Dendritic cell treated with granulocyte-macrophage colony-stimulating factor and Interleukin-4, amounts not matched to agents 40 ng/mL and 50 ng/mL, for 4 days (primary cell): ENCODE measurements at regions of chr12 and their contacts with region 1.

Region 1: GRCh38 chr12:110600254-110600653 is 13.7 kb upstream of the TCTN1 start:
- H3K4me3 Mint-ChIP-seq: peak overlapping the region; percentile 20
- H3K27ac Mint-ChIP-seq: peak overlapping the region; percentile 62
- H3K4me1 Mint-ChIP-seq: peaks cover 25% of the 10 kb centered on the region
- H3K27me3 Mint-ChIP-seq: no peaks in the 10 kb centered on the region

Region 2: GRCh38 chr12:110449799-110450497 is 150.3 kb before region 1 on chr12 and contains the start of gene ARPC3:
- intact Hi-C with region 1: loop called (anchors 1 kb)
- H3K4me3 Mint-ChIP-seq: peak within 1 kb of the TSS; percentile 100
- H3K27ac Mint-ChIP-seq: peak within 1 kb of the TSS; percentile 100
- H3K4me1 Mint-ChIP-seq: peaks cover 57% of the 10 kb centered on the region
- H3K27me3 Mint-ChIP-seq: no peaks in the 10 kb centered on the region

Region 3: DNA sequence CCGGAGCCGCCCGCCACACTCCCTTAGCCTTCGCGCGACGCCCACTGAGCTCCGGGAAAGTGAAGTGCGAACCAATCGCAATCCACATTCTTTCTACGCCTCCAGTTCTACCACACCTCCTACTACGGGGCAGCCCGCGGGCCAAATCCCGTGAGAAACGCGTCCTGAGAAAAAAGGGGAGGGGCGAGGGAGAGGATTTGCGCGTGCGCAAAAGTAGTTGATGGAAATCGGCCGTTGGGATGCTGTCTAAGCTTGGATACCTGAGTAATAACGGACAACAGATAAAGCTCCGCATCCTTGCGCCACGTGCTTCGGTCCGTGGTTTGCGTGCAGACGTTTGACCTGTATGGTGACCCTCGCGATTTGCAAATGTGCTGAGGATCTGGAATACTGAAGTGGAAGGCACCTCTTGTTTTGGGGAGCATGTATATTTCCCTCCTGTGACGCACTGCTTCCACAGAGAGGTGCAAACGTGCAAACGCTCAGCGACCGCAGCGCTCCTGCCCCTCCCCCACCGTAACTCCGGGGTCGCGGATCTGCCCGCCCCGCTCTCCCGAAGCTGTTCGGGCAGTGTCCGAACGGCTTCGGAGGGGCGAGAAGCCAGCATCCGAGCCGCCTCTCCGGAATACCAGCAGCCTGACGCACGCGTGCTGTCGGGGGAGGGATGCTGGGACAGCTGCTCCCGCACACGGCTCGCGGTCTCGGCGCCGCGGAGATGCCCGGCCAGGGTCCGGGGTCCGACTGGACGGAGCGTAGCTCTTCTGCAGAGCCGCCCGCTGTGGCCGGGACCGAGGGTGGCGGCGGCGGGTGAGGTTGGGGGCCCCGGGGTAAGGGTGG is 131.8 kb before region 1 on chr12 and contains the starts of genes FAM216A and GPN3:
- intact Hi-C with region 1: loop called (anchors 5 kb)
- H3K4me3 Mint-ChIP-seq: peak within 1 kb of the TSS; percentile 96
- H3K27ac Mint-ChIP-seq: peak within 1 kb of the TSS; percentile 84
- H3K4me1 Mint-ChIP-seq: peaks cover 33% of the 10 kb centered on the region
- H3K27me3 Mint-ChIP-seq: no peaks in the 10 kb centered on the region

Region 4: DNA sequence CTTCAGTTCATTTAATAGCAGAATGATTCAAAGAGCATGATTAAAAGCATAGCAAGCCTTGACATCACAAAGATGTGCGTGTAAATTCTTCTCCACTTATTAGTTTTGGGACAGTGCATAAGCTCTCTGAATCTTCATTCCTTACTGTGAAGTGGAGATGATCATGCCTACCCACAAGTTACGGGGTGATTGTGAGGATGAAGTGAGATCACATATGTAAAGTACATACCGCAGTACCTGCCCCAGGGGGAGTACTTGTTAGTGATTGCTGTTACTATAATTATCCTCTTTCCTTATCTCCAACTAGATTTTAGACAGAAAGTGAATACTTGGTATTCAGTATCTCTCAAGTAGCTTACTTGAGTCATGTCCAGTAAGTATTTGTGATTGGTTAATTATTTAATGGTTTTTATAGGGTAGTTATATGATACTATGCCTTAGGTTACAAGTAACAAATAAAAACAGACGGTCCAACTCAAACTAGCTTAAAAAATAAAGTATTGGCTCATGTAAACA is 92.1 kb before region 1 on chr12:
- intact Hi-C with region 1: loop called (anchors 1 kb)
- H3K4me3 Mint-ChIP-seq: no peak overlapping the region
- H3K27ac Mint-ChIP-seq: no peak overlapping the region
- H3K4me1 Mint-ChIP-seq: no peaks in the 10 kb centered on the region
- H3K27me3 Mint-ChIP-seq: no peaks in the 10 kb centered on the region

Region 5: GRCh38 chr12:110555577-110556406 is 44.5 kb before region 1 on chr12:
- intact Hi-C with region 1: loop called (anchors 1 kb)
- H3K4me3 Mint-ChIP-seq: no peak overlapping the region
- H3K27ac Mint-ChIP-seq: peak overlapping the region; percentile 50
- H3K4me1 Mint-ChIP-seq: peaks cover 47% of the 10 kb centered on the region
- H3K27me3 Mint-ChIP-seq: no peaks in the 10 kb centered on the region

Region 6: DNA sequence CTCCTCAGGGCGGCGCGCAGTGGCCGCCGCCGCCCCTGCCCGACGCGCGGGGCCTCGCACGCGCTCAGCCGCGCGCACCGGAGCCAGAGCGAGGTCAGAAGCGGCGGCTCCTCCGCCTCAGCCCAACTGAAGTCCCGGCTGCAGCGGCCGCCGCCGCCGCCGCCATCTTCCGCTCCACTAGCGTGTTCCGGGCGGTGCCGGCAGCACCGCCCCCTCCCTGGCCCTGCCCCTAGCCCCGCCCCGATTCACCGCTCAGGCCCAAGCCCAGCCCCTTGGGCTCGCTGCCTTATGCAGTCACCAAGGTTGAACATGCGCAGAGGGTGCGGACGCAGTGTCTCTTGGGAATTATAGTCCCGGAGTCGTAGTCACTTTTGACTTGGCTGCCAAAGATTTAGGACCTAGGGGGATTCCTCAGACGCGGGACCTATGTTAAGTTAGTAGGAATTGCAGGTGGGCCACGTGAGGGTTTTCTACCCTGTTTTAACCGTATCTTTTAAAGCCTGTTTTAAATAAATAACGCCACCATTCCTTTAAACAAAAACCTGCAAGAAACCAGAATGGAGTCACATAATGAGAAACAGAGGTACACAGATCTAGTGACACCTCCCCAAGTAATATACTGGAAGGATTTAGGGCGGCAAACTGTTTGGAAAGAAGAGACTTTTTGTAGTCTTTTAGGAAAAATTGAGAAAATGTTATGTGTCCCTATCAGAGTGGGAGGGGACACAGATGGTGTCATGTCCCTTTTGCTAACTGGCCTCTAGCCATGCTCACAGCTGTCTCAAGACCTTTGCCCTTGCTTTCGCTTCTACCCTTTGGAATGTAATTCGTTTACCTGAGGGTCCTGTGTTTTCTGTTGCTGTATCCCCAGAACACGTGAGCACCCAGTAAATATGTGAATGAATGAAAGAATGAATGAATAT is 16.9 kb before region 1 on chr12 and contains the start of gene PPTC7:
- intact Hi-C with region 1: loop called (anchors 2 kb)
- H3K4me3 Mint-ChIP-seq: peak within 1 kb of the TSS; percentile 98
- H3K27ac Mint-ChIP-seq: peak within 1 kb of the TSS; percentile 95
- H3K4me1 Mint-ChIP-seq: peaks cover 61% of the 10 kb centered on the region
- H3K27me3 Mint-ChIP-seq: no peaks in the 10 kb centered on the region

Region 7: GRCh38 chr12:110613771-110614684 is 13.8 kb after region 1 on chr12 and contains the start of gene TCTN1:
- intact Hi-C with region 1: loop called (anchors 1 kb)
- H3K4me3 Mint-ChIP-seq: peak within 1 kb of the TSS; percentile 89
- H3K27ac Mint-ChIP-seq: peak within 1 kb of the TSS; percentile 91
- H3K4me1 Mint-ChIP-seq: peaks cover 4% of the 10 kb centered on the region
- H3K27me3 Mint-ChIP-seq: no peaks in the 10 kb centered on the region

Region 8: DNA sequence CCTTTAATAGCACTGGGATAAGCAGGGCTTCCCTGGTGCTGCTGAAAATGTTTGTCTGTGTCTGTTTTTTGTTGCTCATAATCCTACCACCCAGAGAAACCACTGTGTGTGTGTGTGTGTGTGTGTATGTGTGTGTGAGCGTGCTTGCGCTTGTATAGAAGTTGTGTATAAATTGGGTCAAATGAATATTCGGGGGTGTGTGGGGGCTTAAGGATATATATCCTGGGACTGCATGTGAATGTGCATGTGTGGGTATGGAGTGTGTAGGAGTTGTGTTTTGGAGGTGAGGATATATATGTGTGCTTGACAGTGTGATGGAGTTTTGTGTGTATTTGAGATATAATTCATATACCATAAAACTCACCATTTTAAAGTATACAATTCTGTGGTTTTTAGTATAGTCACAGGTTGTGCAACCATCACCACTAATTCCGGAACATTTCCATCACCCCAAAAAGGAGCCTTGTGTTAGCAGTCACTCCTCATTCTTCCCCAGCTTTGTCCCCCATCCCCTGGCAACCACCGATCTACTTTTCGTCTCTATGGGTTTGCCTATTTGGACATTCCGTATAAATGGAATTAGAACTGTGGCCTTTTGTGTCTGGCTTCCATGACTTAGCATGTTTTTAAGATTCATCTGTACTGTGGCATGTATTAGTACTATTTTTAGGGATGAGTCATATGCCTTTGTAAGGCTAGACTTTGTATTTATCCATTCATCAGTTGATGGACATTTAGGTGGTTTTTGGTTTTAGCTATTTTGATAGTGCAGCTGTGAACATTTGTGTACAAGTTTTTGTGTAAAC is 39.3 kb after region 1 on chr12:
- intact Hi-C with region 1: no loop called
- H3K4me3 Mint-ChIP-seq: no peak overlapping the region
- H3K27ac Mint-ChIP-seq: no peak overlapping the region
- H3K4me1 Mint-ChIP-seq: peaks cover 61% of the 10 kb centered on the region
- H3K27me3 Mint-ChIP-seq: no peaks in the 10 kb centered on the region

Region 9: DNA sequence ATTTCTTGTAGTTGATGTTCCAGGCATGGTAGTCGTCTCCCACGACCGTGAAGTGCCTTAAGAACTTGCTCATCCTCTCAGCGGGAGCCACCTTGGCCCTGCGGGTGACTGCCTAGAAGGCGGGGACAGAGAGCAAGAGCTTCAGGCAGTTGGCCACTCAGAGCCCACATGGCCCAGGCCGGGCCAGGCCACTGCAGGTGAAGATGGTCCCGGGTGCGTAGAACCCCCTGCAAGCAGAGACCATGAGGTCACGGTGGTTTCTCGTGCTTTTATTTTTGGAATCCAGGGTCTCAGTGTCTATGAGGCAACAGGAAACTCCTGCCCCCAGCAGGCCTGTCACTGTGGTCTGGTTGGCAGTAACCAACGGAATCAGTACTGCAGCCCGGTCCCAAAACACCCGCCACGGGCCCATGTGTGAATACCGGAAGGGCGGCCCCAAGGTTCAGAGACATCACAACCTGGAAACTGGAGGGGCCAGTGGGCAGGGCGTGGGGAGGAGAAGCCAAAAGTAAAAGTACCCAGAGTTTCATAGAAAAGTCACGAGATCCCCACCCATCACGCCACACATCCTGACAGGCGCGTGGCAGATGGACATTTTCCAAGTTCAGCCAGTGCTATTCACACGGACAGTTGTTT is 61.2 kb after region 1 on chr12:
- intact Hi-C with region 1: no loop called
- H3K4me3 Mint-ChIP-seq: peak overlapping the region; percentile 44
- H3K27ac Mint-ChIP-seq: peak overlapping the region; percentile 74
- H3K4me1 Mint-ChIP-seq: peaks cover 40% of the 10 kb centered on the region
- H3K27me3 Mint-ChIP-seq: no peaks in the 10 kb centered on the region

Region 10: GRCh38 chr12:110813285-110813684 is 213.0 kb after region 1 on chr12:
- intact Hi-C with region 1: no loop called
- H3K4me3 Mint-ChIP-seq: no peak overlapping the region
- H3K27ac Mint-ChIP-seq: no peak overlapping the region
- H3K4me1 Mint-ChIP-seq: peaks cover 14% of the 10 kb centered on the region
- H3K27me3 Mint-ChIP-seq: peaks cover 29% of the 10 kb centered on the region